ENCODE measurements at regions of chr13 and their contacts with region 1.

Region 1: DNA sequence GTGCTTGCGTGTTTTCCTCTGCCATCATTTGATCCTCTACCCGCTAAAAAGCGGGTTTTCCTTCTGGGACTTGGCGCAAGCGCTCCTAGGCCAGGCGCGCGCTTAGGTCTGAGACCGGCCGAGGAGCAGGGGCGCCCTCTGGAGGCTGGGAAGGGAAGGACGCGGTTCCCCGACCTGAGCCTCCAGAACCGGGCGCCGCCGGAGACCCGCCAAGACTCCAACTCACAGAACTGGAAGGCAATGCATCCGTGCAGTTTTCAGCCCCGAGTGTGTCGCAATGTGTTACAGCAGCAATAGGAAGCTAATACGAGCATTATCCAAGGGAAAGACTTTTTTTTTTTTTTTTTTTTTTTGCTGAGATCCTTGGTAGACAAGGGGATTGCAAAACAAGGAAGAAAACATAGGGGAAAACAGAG is 190.9 kb downstream of the COL4A1 start:
- DNase-seq: peak; percentile 43 to 50
- H3K4me3 ChIP-seq: no peak overlapping the region
- H3K27ac ChIP-seq: no peak overlapping the region
- H3K4me1 ChIP-seq: peaks cover 0 to 5% of the 10 kb centered on the region in 2 donors
- H3K27me3 ChIP-seq: no peaks in the 10 kb centered on the region
- CTCF ChIP-seq: peak; percentile 41 to 68 (median 48)
- POLR2A ChIP-seq: no peak

Region 2: GRCh38 chr13:109145631-109146030 is 970.4 kb before region 1 on chr13:
- intact Hi-C with region 1: loop called (anchors 10 kb)
- DNase-seq: peak; percentile 57 to 63
- H3K4me3 ChIP-seq: no peak overlapping the region
- H3K27ac ChIP-seq: no peak overlapping the region
- H3K4me1 ChIP-seq: peaks cover 0 to 4% of the 10 kb centered on the region in 2 donors
- H3K27me3 ChIP-seq: no peaks in the 10 kb centered on the region
- CTCF ChIP-seq: peak; percentile 32 to 84 (median 73)
- POLR2A ChIP-seq: no peak

Region 3: GRCh38 chr13:109968876-109969577 is 147.1 kb before region 1 on chr13:
- intact Hi-C with region 1: no loop called
- DNase-seq: no peak
- H3K4me3 ChIP-seq: no peak overlapping the region
- H3K27ac ChIP-seq: no peak overlapping the region
- H3K4me1 ChIP-seq: no peaks in the 10 kb centered on the region
- H3K27me3 ChIP-seq: no peaks in the 10 kb centered on the region
- CTCF ChIP-seq: no peak
- POLR2A ChIP-seq: no peak

Region 4: DNA sequence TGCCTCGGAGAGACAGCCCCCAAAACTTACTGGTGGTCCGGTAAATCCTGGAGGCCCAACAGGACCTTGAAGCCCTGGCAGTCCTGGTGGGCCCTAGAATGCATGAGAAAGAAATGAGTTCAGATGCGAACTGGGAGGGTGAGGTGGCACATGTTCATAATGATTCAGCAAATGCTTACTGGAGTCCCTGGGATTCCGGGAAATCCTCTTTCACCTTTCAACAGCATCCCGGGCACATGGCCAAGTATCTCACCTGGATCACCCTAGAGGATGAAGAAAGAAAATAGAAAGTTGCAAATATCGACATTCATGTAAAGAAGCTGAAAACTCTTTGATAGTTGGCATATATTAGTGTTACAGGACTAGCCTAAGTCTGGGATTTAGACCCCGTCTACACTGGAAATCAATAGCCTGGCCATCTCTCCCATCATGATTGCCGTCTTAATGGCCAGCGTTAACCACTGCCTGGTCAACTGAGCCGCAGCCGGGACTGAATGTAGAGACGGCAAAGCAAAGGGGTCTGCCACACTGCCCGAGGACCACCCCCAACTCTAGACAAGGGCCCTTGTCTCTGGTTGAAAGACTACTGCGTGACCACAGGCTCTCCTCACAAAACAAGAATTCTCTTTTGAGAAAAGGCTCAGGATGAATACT is 94.0 kb after region 1 on chr13:
- intact Hi-C with region 1: no loop called
- DNase-seq: peak; percentile 17 to 45
- H3K4me3 ChIP-seq: no peak overlapping the region
- H3K27ac ChIP-seq: no peak overlapping the region
- H3K4me1 ChIP-seq: no peaks in the 10 kb centered on the region
- H3K27me3 ChIP-seq: no peaks in the 10 kb centered on the region
- CTCF ChIP-seq: no peak
- POLR2A ChIP-seq: no peak